ENCODE measurements at regions of chr2 and their contacts with region 1.

Region 1: DNA sequence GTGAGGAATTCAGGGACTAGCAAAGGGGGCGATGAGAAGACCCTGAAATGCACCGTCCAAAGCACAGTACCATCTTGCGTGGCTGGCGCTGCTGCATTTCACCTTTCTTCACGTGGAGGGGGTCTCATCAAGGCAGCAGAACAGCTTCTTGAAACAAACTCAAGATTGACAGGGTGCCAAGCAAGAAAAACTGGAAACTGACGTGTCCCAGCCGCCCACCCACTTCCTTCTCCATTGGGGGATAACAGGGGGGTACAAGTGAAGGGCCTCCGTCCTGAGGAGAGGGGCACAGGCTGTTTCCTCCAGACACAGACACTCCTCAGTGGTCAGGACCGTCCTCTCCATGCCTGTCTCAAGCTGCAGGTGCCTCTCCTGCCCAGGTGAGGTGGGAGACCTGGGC is 32.5 kb downstream of the HDAC4 start:
- DNase-seq: no peak
- H3K4me3 ChIP-seq: no peak overlapping the region
- H3K27ac ChIP-seq: no peak overlapping the region
- H3K4me1 ChIP-seq: no peaks in the 10 kb centered on the region
- H3K27me3 ChIP-seq: no peaks in the 10 kb centered on the region
- CTCF ChIP-seq: no peak

Region 2: DNA sequence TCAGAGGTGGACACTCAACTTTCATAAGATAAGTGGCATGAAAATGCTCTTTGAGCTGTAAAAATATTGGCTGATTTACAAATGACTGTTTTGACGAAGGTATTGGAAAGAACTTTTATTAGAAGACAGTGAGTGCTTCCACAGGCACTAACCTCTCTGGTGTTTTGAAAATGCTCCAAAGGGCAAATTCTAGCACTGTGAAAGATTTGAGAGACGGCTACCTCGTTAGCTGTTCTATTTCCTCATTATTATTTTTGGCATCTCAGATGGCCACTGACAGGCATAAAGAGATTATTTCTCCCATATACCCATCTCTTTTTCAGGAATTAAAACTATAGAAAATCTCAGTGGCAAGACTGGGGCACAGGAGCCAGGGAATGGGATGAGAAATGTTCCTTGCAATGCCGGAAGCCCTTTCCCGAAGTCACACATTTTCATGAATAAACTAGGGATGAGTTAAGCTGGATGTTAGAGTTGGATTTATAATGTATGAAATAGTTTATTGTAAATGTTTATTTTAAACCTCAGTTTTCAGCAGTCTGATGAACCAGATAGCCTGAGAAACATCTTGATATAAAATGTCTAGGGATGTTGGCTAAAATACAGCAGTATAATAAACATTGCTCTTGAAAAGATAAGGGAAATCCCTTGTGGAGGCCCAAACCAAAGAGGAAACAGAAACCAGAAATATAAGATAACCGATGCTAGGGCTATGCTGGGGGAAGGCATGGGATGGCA is 765.9 kb before region 1 on chr2:
- CTCF ChIA-PET with region 1: no interaction called
- POLR2A ChIA-PET with region 1: interaction called, 12 read pairs
- intact Hi-C with region 1: no loop called
- DNase-seq: no peak
- H3K4me3 ChIP-seq: no peak overlapping the region
- H3K27ac ChIP-seq: no peak overlapping the region
- H3K4me1 ChIP-seq: no peaks in the 10 kb centered on the region
- H3K27me3 ChIP-seq: peaks cover 56% of the 10 kb centered on the region
- CTCF ChIP-seq: no peak

Region 3: DNA sequence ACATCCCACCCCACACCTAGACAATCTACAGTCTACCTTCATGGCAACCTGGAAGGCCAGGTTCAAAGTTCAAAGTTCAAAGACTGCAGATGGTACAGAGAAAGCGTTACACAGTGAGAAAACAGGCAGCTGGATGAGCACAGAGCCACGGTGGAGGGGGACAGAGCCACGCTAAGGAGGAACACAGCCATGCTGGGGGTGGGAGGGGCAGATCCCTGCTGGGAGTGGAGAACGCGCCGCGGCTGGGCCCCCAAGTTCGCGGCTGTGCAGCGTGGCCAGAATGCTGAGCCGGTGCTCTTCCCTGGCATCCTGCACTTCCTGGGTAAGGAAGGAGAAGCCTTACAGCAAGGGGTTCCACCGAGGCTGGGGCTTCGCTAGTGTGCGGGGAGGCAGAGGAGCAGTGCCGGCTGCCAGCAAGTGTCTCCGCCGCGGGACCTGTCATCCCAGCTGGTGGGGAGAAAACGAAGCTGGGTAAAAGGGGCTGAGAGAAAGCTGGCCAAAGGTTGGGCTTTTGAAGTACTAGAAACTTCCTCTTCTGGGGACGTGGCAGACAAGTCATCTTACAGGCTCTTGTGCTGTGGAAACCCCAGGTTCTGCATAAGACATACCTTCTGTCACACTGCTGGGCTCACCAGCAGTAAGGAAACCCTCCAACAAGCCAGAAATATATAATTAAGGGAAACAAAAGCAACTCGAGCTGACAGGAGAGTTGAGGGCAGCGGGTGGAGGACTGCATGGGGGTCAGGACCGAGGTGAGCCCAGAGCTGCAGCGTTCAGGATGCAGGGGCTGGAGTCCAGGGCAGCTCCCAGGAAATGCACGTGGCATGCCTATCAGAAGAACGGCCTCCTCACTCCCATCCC is 83.0 kb before region 1 on chr2:
- CTCF ChIA-PET with region 1: no interaction called
- POLR2A ChIA-PET with region 1: no interaction called
- intact Hi-C with region 1: no loop called
- DNase-seq: no peak
- H3K4me3 ChIP-seq: no peak overlapping the region
- H3K27ac ChIP-seq: no peak overlapping the region
- H3K4me1 ChIP-seq: peaks cover 6% of the 10 kb centered on the region
- H3K27me3 ChIP-seq: no peaks in the 10 kb centered on the region
- CTCF ChIP-seq: no peak

Measured in PC-9 (cell line).